ENCODE measurements at regions of chr14 and their contacts with region 1.

Region 1: GRCh38 chr14:81269100-81269978 is 48.6 kb upstream of the GTF2A1 start:
- DNase-seq: peak in 2 of 5 donors; percentile 21 to 23
- H3K4me3 ChIP-seq: no peak overlapping the region
- H3K4me3 Mint-ChIP-seq: no peak overlapping the region
- H3K27ac ChIP-seq: no peak overlapping the region
- H3K27ac Mint-ChIP-seq: no peak overlapping the region
- H3K4me1 ChIP-seq: no peaks in the 10 kb centered on the region
- H3K4me1 Mint-ChIP-seq: no peaks in the 10 kb centered on the region
- H3K27me3 ChIP-seq: no peaks in the 10 kb centered on the region
- H3K27me3 Mint-ChIP-seq: peaks cover 9 to 32% of the 10 kb centered on the region in 2 donors

Region 2: DNA sequence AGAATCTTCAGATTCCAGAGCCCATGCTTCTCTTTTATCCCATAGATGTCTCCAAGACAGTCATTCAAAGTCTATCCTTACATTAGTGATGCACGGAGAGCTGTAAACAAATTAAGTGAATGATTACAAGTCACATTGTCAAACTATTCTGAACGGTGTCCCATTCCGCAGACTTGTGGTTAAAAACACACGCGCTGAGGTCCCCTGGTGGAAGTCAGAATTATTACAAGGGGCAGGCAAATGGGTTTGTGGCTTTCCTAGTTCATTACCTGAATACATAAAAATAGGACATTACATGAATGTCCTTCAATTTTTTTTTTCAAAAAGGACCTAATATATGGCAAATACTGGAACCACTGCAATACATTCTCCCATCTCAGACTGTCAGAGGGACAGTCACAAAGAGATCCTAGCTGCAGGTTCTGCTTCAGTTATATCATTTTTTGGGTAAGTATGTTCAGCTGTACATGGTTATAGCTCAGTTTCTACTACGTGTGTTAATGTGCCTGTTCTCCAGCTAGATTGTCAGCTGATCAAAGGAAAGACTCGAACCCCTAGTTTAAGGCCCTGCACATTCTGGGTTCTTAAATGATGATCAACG is 183.9 kb after region 1 on chr14:
- CTCF ChIA-PET with region 1: interaction called, 13 read pairs
- POLR2A ChIA-PET with region 1: no interaction called
- DNase-seq: peak in 4 of 5 donors; percentile 26 to 62 (median 32)
- H3K4me3 ChIP-seq: no peak overlapping the region
- H3K4me3 Mint-ChIP-seq: peak overlapping the region in 2 of 7 donors; percentile 3 to 32
- H3K27ac ChIP-seq: no peak overlapping the region
- H3K27ac Mint-ChIP-seq: no peak overlapping the region
- H3K4me1 ChIP-seq: no peaks in the 10 kb centered on the region
- H3K4me1 Mint-ChIP-seq: peaks cover 5 to 7% (median 6%) of the 10 kb centered on the region in 3 donors
- H3K27me3 ChIP-seq: no peaks in the 10 kb centered on the region
- H3K27me3 Mint-ChIP-seq: peaks cover 7 to 28% of the 10 kb centered on the region in 2 donors

Measured in CD8-positive, alpha-beta memory T cell (primary cell).